B cell (primary cell): ENCODE measurements at regions of chr2 and their contacts with region 1.

Region 1: GRCh38 chr2:196171248-196171871 is at the start of gene STK17B:
- DNase-seq: peak; percentile 98
- ATAC-seq: peak; percentile 66
- H3K4me3 ChIP-seq: peak within 1 kb of the TSS; percentile 94 to 100 (median 98)
- H3K4me3 Mint-ChIP-seq: peak within 1 kb of the TSS; percentile 100
- H3K27ac ChIP-seq: peak within 1 kb of the TSS; percentile 93 to 99
- H3K27ac Mint-ChIP-seq: peak within 1 kb of the TSS; percentile 99
- H3K4me1 ChIP-seq: peaks cover 50 to 51% of the 10 kb centered on the region in 2 donors
- H3K4me1 Mint-ChIP-seq: peaks cover 56% of the 10 kb centered on the region
- H3K27me3 ChIP-seq: no peaks in the 10 kb centered on the region
- H3K27me3 Mint-ChIP-seq: no peaks in the 10 kb centered on the region
- CTCF ChIP-seq: no peak
- total RNA-seq, gene STK17B: 249 and 261 TPM in 2 replicates

Region 2: DNA sequence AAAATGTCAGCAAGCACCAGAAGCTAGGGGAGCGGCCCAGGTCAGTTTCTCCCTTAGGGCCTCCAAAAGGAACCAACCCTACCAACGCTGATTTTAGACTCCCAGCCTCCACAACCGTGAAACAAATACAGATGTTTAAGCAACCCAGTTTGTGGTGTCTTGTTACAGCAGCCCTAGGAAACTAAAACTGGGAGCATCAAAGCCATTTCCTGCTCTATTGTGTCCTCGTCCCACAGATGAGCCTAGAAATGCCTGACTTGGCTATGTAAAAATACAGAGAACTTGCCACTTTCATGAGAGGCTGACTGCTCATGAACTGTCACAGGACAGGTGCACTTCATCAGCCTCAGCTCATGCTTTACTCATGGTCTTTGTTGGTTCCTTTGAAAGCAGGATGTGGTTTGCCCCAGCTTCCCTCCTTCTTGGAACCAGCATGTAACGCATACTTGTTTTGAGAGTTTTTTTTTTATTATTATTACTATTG is 611.9 kb before region 1 on chr2:
- CTCF ChIA-PET with region 1: no interaction called
- POLR2A ChIA-PET with region 1: interaction called, 5 read pairs
- intact Hi-C with region 1: loop called (anchors 5 kb)
- DNase-seq: peak; percentile 83
- ATAC-seq: peak; percentile 66
- H3K4me3 ChIP-seq: peak overlapping the region in 1 of 5 experiments; percentile 37
- H3K4me3 Mint-ChIP-seq: peak overlapping the region; percentile 74
- H3K27ac ChIP-seq: peak overlapping the region; percentile 92 to 94
- H3K27ac Mint-ChIP-seq: peak overlapping the region; percentile 98
- H3K4me1 ChIP-seq: peaks cover 54 to 73% of the 10 kb centered on the region in 2 donors
- H3K4me1 Mint-ChIP-seq: peaks cover 58% of the 10 kb centered on the region
- H3K27me3 ChIP-seq: no peaks in the 10 kb centered on the region
- H3K27me3 Mint-ChIP-seq: no peaks in the 10 kb centered on the region
- CTCF ChIP-seq: no peak

Region 3: DNA sequence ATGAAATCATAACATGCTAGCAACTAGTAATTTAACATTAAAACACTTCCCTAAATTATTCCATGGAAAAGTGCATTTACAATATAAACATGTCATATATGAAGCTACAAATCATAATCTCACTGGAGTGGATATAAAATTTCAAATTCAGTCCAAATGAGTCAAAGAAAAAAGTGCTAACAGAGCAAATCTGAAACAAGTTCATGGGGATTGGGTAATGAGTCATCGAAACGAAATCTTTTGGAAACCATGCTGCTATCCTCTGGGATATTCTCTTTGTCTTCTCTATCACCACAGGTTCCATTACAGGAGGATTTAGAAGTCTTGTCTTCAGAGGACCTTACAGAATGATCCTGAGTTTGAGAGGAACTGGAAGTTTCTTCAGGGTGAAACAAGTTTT is 34.1 kb before region 1 on chr2:
- CTCF ChIA-PET with region 1: interaction called, 4 read pairs
- POLR2A ChIA-PET with region 1: interaction called, 5 read pairs
- intact Hi-C with region 1: loop called (anchors 5 kb)
- DNase-seq: no peak
- ATAC-seq: no peak
- H3K4me3 ChIP-seq: no peak overlapping the region
- H3K4me3 Mint-ChIP-seq: no peak overlapping the region
- H3K27ac ChIP-seq: peak overlapping the region in 1 of 2 donors; percentile 59
- H3K27ac Mint-ChIP-seq: peak overlapping the region; percentile 5
- H3K4me1 ChIP-seq: no peaks in the 10 kb centered on the region
- H3K4me1 Mint-ChIP-seq: peaks cover 2% of the 10 kb centered on the region
- H3K27me3 ChIP-seq: no peaks in the 10 kb centered on the region
- H3K27me3 Mint-ChIP-seq: no peaks in the 10 kb centered on the region
- CTCF ChIP-seq: no peak

Region 4: DNA sequence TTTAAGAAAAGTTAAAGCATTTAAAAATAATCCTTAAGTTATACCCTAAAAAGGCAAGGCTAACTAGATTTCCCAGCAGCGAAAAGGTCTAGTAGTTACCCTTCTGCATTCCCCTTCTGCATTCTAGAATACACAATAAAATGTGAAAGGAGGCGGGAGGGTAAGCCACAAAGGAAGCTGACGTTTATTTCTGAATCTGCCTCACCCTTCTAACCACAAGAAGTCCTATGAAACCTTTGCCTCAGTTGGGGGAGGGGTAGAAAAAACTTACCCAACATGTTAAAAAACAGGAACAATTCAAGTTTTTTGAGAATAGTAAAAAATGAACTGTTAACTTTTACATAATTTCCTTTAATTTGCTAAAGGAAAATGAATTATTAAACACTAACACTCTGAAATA is 11.3 kb before region 1 on chr2:
- CTCF ChIA-PET with region 1: interaction called, 14 read pairs
- POLR2A ChIA-PET with region 1: interaction called, 22 read pairs
- intact Hi-C with region 1: loop called (anchors 1 kb)
- DNase-seq: peak; percentile 92
- ATAC-seq: peak; percentile 82
- H3K4me3 ChIP-seq: peak overlapping the region in 3 of 5 experiments; percentile 8 to 65 (median 13)
- H3K4me3 Mint-ChIP-seq: peak overlapping the region; percentile 56
- H3K27ac ChIP-seq: peak overlapping the region; percentile 47 to 96
- H3K27ac Mint-ChIP-seq: peak overlapping the region; percentile 82
- H3K4me1 ChIP-seq: peaks cover 56 to 93% of the 10 kb centered on the region in 2 donors
- H3K4me1 Mint-ChIP-seq: peaks cover 66% of the 10 kb centered on the region
- H3K27me3 ChIP-seq: no peaks in the 10 kb centered on the region
- H3K27me3 Mint-ChIP-seq: no peaks in the 10 kb centered on the region
- CTCF ChIP-seq: no peak

Region 5: GRCh38 chr2:196205881-196206435 is 34.6 kb after region 1 on chr2:
- CTCF ChIA-PET with region 1: interaction called, 10 read pairs
- POLR2A ChIA-PET with region 1: interaction called, 16 read pairs
- intact Hi-C with region 1: loop called (anchors 1 kb)
- DNase-seq: no peak
- ATAC-seq: no peak
- H3K4me3 ChIP-seq: no peak overlapping the region
- H3K4me3 Mint-ChIP-seq: no peak overlapping the region
- H3K27ac ChIP-seq: no peak overlapping the region
- H3K27ac Mint-ChIP-seq: no peak overlapping the region
- H3K4me1 ChIP-seq: peaks cover 18 to 20% of the 10 kb centered on the region in 2 donors
- H3K4me1 Mint-ChIP-seq: peaks cover 48% of the 10 kb centered on the region
- H3K27me3 ChIP-seq: no peaks in the 10 kb centered on the region
- H3K27me3 Mint-ChIP-seq: no peaks in the 10 kb centered on the region
- CTCF ChIP-seq: no peak

Region 6: DNA sequence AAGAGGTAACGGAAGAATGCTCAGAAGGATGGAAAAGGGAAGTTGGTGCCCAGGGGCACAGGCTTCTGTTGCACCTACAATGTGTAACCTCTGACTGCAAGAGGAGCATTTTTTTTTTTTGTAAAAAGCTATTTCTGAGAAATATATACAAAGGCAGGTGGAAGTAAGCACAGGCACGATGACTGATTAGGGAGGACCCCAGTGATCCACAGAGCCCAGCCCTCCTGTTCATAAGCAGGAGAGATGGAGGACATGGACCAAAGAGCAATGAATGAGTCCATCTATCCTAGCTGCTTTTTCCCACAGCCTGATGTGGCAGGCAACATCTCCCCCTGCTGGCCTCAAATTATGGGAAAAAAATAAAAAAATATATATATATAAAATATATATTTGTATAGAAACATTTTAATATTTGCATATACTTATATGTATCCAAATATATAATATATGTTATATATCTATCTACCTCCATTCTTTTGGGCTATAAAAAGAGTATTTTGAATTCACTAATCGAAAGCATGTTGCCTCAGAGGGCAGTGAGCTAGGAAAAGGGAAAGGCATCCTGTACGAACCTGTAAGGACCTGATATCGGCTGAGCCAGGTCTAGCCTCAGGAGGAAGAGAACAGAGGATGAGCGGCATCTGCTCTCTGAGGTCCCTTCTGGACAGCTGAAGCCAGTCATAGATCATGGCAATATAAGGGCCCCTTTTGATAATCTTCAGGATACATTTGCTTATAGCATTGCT is 166.0 kb after region 1 on chr2:
- CTCF ChIA-PET with region 1: interaction called, 11 read pairs
- POLR2A ChIA-PET with region 1: interaction called, 5 read pairs
- intact Hi-C with region 1: no loop called
- DNase-seq: peak; percentile 58
- ATAC-seq: peak; percentile 51
- H3K4me3 ChIP-seq: no peak overlapping the region
- H3K4me3 Mint-ChIP-seq: no peak overlapping the region
- H3K27ac ChIP-seq: peak overlapping the region in 1 of 2 donors; percentile 52
- H3K27ac Mint-ChIP-seq: peak overlapping the region; percentile 43
- H3K4me1 ChIP-seq: peaks cover 10 to 11% of the 10 kb centered on the region in 2 donors
- H3K4me1 Mint-ChIP-seq: peaks cover 19% of the 10 kb centered on the region
- H3K27me3 ChIP-seq: no peaks in the 10 kb centered on the region
- H3K27me3 Mint-ChIP-seq: no peaks in the 10 kb centered on the region
- CTCF ChIP-seq: peak; percentile 66